ENCODE measurements at regions of chr19 and their contacts with region 1.

Region 1: DNA sequence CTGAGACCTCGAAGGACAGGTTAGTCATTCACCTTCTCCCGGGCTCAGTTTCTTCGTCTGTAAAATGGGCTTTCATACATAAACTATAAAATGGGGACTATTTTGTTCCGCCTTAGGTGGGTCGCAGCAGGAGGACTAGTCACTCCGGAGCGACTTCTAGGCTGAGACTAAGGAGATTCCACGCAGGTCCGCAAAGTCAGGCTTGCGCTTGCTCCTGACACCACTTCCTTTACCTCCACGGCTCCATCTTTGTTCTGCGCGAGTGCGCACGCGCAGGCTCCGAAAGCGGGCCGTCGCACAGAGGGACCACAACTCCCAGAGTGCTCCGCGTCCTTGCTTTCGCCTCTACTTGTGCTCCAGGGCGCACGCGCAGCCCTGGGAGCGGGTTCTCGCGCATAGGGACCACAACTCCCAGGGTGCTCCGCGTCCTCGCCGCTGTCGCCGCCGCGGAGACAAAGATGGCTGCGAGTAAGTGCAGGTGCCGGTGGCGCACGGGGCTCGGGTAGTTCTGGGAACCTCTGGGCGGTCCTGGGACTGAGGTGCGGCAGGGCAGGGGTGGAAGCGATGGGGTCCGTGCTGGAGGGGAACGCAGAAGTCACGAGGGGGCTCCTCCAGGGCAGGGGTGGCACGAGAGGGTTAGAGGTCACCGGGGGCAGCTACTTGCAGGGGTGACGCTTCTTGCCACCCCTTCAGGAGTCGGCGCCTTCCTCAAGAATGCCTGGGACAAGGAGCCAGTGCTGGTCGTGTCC is at the start of gene NDUFA3:
- DNase-seq: peak; percentile 99
- ATAC-seq: peak; percentile 100
- H3K4me3 ChIP-seq: peak within 1 kb of the TSS; percentile 86
- H3K27ac ChIP-seq: peak within 1 kb of the TSS; percentile 76
- H3K4me1 ChIP-seq: peaks cover 3% of the 10 kb centered on the region
- H3K27me3 ChIP-seq: peaks cover 0 to 9% (median 0%) of the 10 kb centered on the region in 3 donors
- CTCF ChIP-seq: no peak
- total RNA-seq, gene NDUFA3: 260 to 361 (median 307) TPM

Region 2: DNA sequence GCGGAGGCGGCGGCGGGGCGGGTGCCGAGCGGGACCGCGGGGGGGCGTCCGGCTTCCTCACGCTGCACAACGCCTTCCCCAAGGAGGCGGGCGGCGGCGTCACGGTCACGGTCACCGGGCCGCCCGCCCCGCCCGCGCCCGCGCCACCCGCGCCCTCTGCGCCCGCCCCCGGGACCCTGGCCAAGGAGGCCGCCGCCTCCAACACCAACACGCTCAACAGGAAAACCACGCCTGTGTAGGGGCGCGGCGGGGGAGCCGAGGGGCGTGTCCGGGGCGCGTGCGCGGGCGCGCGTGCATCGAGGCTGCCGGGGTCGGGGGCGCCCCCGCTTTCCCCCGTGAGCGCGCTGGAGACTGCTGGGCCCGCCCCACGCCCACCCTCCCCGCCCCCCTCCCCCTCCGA is 120.0 kb before region 1 on chr19:
- intact Hi-C with region 1: loop called in 1 of 2 experiments (anchors 10 kb)
- DNase-seq: peak; percentile 53 to 85
- ATAC-seq: peak in 3 of 4 donors; percentile 25 to 47 (median 35)
- H3K4me3 ChIP-seq: peak overlapping the region; percentile 48
- H3K27ac ChIP-seq: no peak overlapping the region
- H3K4me1 ChIP-seq: peaks cover 8% of the 10 kb centered on the region
- H3K27me3 ChIP-seq: peaks cover 0 to 12% (median 5%) of the 10 kb centered on the region in 3 donors
- CTCF ChIP-seq: no peak